ENCODE measurements at regions of chr18 and their contacts with region 1.

Region 1: GRCh38 chr18:24488824-24489493 is 28.5 kb downstream of the HRH4 start:
- DNase-seq: peak; percentile 55
- CTCF ChIP-seq: peak; percentile 68

Region 2: GRCh38 chr18:23640023-23640422 is 848.9 kb before region 1 on chr18:
- CTCF ChIA-PET with region 1: no interaction called
- POLR2A ChIA-PET with region 1: no interaction called
- DNase-seq: no peak
- CTCF ChIP-seq: no peak

Region 3: GRCh38 chr18:24176727-24177416 is 312.1 kb before region 1 on chr18:
- CTCF ChIA-PET with region 1: interaction called, 15 read pairs
- POLR2A ChIA-PET with region 1: no interaction called
- DNase-seq: peak; percentile 66
- CTCF ChIP-seq: peak; percentile 79

Region 4: DNA sequence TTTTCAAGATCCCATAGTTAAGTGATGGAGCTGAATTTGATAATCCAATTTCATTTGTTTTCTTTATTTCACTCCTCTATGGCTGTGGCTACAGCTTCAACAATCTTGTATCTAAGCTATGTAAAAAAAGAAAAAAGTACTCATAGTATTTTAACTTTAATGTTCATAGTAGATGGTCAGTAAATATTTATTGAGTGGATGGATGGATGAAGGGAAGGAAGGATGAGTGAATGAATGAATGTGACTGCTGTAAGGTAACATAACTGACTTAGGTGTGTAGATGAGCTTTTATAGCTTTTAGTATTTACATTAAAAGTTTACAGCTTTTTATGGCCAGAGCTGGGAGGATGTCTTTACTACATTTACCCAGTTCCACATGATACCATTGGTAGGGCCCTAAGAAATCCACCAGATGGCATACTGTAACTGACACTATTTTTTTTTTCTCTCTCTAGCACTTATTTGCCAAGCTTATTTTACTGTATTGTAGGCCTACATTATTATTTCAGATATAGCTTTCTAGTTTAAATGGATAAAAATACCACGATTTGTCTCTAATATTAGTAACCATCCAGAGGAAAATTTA is 41.9 kb before region 1 on chr18:
- CTCF ChIA-PET with region 1: interaction called, 11 read pairs
- POLR2A ChIA-PET with region 1: no interaction called
- DNase-seq: no peak
- CTCF ChIP-seq: no peak

Region 5: DNA sequence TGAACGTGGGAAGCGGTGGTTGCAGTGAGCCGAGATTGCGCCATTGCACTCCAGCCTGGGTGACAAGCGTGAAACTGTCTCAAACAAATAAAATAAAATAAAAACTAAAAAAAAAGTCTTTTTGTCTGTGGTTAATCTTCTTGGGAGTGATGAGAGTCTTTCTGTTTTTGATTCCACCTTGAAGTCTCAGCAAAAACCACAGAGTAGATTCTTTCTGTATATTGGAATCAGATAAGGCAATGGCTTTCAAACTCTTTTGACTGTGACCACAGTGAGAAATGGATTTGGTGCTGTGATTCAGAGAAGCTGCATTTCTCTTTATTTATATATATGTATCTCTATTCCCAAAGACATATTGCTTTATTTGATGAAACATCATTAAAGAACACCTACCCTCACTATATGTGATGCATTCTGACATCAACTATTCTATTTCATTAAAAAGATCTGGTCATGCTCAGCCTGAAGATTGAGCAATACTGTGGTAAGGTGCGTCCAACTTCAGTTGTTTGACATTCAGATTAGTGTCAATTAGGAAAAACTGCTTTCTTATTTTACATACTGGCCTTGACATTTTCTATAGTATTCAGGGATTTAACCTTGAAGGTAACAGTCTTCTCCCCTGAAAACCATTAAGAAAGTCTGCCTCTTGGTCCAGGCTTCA is 12.9 kb before region 1 on chr18:
- CTCF ChIA-PET with region 1: interaction called, 10 read pairs
- POLR2A ChIA-PET with region 1: no interaction called
- DNase-seq: no peak
- CTCF ChIP-seq: no peak

Region 6: DNA sequence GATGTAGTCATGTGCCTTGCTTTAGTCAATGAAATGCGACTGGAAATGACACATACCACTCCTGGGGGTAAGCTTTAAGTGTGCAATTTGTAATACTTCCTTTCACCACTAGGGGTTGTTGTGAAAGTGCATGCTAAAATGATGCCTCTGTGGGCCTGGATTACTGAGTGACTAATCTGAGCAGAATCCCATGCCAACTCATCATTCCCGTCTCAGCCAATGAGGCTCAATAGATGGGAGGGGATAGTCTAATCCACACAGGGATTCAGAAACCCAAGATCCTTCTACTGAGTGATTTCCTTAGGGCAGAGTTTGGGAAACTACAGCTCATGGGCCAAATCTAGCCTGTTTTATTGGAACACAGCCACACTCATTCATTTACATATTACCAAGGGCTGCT is 25.5 kb after region 1 on chr18:
- CTCF ChIA-PET with region 1: interaction called, 33 read pairs
- POLR2A ChIA-PET with region 1: no interaction called
- DNase-seq: peak; percentile 44
- CTCF ChIP-seq: peak; percentile 50